Activated CD4-positive, alpha-beta T cell treated with anti-CD3 and anti-CD28 coated beads, Interleukin-2, amount 10 ng/mL, durations not matched to agents 24 days and 14 days (primary cell): ENCODE measurements at regions of chr12 and their contacts with region 1.

Region 1: GRCh38 chr12:52139552-52140062 is 52.2 kb downstream of the KRT80 start:
- DNase-seq: peak; percentile 82
- H3K4me3 Mint-ChIP-seq: no peak overlapping the region
- H3K27ac Mint-ChIP-seq: no peak overlapping the region
- H3K4me1 Mint-ChIP-seq: no peaks in the 10 kb centered on the region
- H3K27me3 Mint-ChIP-seq: peaks cover 5% of the 10 kb centered on the region

Region 2: DNA sequence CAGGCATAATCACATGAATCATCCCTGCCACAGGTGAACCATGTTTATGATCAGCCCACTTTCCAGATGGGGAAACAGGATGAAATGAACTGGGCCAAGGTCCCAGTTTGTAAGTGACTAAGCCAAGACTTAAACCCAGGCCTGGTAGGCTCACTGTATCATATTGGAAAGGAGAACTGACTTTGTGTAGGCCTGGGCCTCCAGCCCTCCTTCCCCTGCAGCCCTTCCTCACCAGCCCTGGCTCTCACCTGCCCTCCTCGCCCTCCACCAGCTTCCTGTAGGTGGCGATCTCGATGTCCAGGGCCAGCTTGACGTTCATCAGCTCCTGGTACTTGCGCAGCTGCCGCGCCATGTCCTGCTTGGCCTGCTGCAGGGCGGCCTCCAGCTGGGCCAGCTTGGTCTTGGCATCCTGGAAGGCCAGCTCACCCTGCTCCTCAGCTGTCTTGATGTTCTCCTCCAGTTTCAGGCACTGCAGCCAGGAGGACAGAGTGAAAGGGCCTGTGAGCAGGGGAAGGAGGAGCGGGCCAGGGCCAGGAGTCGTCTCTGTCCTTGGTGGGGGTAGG is 32.4 kb after region 1 on chr12:
- intact Hi-C with region 1: no loop called
- DNase-seq: peak; percentile 76
- H3K4me3 Mint-ChIP-seq: no peak overlapping the region
- H3K27ac Mint-ChIP-seq: no peak overlapping the region
- H3K4me1 Mint-ChIP-seq: peaks cover 1% of the 10 kb centered on the region
- H3K27me3 Mint-ChIP-seq: no peaks in the 10 kb centered on the region

Region 3: GRCh38 chr12:52879394-52880351 is 740.1 kb after region 1 on chr12:
- intact Hi-C with region 1: loop called (anchors 1 kb)
- DNase-seq: peak; percentile 93
- H3K4me3 Mint-ChIP-seq: peak overlapping the region; percentile 82
- H3K27ac Mint-ChIP-seq: no peak overlapping the region
- H3K4me1 Mint-ChIP-seq: peaks cover 8% of the 10 kb centered on the region
- H3K27me3 Mint-ChIP-seq: peaks cover 8% of the 10 kb centered on the region